Right ventricle myocardium inferior (tissue), 1 donor: ENCODE measurements at regions of chr11 and their contacts with region 1.

Region 1: GRCh38 chr11:104531075-104531474 is 367.1 kb upstream of the PDGFD start:
- DNase-seq: no peak
- ATAC-seq: no peak

Region 2: DNA sequence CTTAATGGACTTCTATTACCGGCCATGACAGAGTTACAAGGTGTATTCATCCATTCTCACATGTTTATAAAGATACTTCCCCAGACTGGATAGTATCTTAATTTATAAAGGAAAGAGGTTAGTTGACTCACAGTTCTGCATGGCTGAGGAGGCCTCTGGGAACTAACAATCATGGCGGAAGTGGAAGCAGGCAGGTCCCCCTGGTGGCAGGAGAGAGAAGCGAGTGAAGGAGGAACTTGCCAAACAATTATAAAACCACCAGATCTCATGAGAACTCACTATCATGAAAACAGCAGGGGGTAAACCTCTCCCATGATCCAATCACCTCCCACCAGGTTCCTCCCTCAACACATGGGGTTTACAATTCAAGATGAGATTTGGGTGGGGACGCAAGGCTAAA is 197.1 kb before region 1 on chr11:
- intact Hi-C with region 1: no loop called
- DNase-seq: no peak
- ATAC-seq: no peak

Region 3: DNA sequence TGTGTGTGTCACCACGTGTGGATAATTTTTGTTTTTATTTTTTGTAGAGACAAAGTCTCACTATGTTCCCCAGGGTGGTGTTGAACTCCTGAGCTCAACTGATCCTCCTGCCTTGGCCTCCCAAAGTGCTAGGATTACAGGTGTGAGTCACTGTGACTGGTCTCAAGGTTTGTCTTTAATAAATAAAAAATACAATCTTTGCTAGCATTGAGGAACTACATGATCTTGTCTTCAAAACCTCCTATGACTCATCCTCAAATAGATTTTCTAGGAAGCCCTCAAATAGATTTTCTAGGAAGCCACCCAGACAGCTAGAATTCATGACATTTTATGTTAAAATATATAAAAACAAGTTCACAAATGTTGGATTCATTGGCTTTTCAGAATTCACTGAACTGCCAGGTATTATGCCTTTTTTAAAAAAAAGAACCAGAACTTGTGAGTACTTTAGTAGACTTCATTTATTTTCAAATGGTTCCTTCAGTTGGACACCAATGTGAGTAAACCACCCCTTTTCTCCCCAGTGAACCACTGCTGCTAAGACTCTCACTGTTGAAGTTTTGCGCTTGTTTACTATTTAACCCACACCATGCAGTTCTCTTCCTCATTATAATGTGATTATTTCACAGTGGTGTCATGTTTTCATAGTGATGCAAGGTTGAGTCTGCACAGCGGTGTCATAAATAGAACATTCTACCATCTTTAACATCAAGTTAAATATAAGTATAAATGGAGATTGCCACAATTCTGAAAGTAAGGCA is 63.3 kb after region 1 on chr11:
- intact Hi-C with region 1: loop called (anchors 10 kb)
- DNase-seq: no peak
- ATAC-seq: no peak